ENCODE measurements at regions of chr9 and their contacts with region 1.

Region 1: GRCh38 chr9:9319007-9319406 is 1293.8 kb downstream of the PTPRD start:
- DNase-seq: no peak
- ATAC-seq: no peak
- H3K4me3 Mint-ChIP-seq: no peak overlapping the region
- H3K27ac Mint-ChIP-seq: no peak overlapping the region
- H3K4me1 Mint-ChIP-seq: no peaks in the 10 kb centered on the region
- H3K27me3 Mint-ChIP-seq: no peaks in the 10 kb centered on the region

Region 2: GRCh38 chr9:9275601-9276000 is 43.4 kb before region 1 on chr9:
- CTCF ChIA-PET with region 1: no interaction called
- POLR2A ChIA-PET with region 1: no interaction called
- intact Hi-C with region 1: loop called in 1 of 2 experiments (anchors 5 kb)
- DNase-seq: no peak
- ATAC-seq: no peak
- H3K4me3 Mint-ChIP-seq: no peak overlapping the region
- H3K27ac Mint-ChIP-seq: no peak overlapping the region
- H3K4me1 Mint-ChIP-seq: no peaks in the 10 kb centered on the region
- H3K27me3 Mint-ChIP-seq: no peaks in the 10 kb centered on the region

Measured in activated CD4-positive, alpha-beta T cell treated with anti-CD3 and anti-CD28 coated beads for 36 hours (primary cell).